H1 (cell line): ENCODE measurements at regions of chr9 and their contacts with region 1.

Region 1: DNA sequence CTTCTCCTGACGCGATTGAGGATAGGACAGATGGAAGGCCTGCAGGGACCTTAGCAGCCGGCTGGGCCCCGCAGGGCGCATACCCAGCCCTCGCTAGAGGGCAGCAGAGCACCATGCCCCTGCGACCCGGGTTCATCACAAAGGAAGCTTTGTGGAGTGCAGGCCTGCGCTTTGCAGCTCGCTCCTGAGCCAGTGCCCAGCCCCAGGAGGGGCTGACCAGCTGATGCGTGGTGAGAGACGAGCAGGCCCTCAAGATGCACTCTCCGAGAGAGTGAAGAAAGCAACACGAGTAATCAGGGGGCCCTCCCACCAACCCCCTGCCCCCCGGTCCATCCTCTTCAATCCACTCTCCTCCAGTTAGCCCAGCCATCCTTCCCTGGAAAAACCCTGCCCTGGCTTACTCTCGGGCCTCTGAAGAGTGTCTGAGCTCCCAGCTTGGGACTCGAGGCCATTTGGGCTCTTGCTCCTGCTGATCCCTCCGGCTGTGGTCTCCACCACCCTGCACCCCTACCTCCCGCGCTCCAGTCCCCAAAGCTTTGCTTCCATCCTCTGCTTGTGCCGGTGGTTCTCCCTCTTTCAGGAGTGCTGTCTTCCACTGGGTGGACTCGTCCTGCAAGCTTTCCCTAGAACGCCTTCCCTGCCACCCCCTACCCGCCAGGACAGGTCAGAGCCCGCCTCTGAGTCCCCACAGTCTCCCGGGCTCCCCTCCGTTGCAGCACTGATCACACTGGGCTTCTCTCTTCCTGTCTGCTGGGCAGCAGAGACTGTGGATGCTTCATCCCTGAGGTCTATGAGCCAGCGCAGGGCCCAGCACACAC is 9.1 kb upstream of the KIF12 start:
- DNase-seq: peak; percentile 80 to 93
- H3K4me3 ChIP-seq: no peak overlapping the region
- H3K27ac ChIP-seq: no peak overlapping the region
- H3K4me1 ChIP-seq: peaks cover 0 to 9% (median 7%) of the 10 kb centered on the region in 4 experiments; a peak in 6 of 7 replicates
- H3K27me3 ChIP-seq: peaks cover 0 to 15% (median 4%) of the 10 kb centered on the region in 4 experiments; a peak in 3 of 7 replicates
- CTCF ChIP-seq: peak; percentile 98 to 99 (median 98)
- EP300 ChIP-seq: no peak
- POLR2A ChIP-seq: no peak
- RAD21 ChIP-seq: peak; percentile 99

Region 2: DNA sequence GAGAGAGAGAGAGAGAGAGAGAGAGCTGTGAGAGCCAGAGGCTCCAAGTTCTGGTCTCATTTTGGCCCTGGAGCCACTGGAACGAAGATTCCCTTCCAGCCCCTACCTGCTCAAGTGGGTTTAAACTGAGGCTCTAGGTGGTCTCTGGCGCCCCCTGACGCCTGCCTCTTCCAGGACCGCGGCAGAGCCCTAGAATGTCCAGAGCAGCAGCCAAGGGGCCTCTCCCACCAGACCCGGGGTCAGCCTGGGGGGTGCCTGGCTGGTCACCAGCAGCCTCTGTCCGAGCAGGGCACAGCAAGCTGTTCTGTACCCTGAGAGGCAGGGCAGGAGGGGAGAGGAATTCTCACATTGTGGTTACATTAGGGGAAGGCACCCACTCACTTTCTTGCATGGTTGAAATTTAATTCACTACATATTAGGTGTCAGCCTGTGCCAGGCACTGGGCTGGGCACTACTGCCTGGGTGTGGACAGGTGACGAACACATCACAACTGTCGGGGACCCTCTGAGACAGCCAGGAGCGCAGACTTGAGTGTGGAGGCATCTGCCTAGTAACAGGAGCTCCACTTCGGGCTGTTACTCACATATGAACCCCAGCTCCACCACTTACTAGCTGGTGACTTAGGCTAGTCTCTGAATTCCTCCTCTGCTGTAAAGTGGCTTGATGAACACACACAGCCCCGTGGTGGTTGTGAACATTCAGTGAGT is 74.7 kb before region 1 on chr9:
- CTCF ChIA-PET with region 1: no interaction called
- POLR2A ChIA-PET with region 1: no interaction called
- DNase-seq: peak in 1 of 2 experiments; percentile 82
- H3K4me3 ChIP-seq: no peak overlapping the region
- H3K27ac ChIP-seq: no peak overlapping the region
- H3K4me1 ChIP-seq: peaks cover 0 to 8% (median 6%) of the 10 kb centered on the region in 4 experiments; a peak in 4 of 7 replicates
- H3K27me3 ChIP-seq: no peaks in the 10 kb centered on the region
- CTCF ChIP-seq: peak; percentile 72 to 84 (median 84)
- EP300 ChIP-seq: no peak
- POLR2A ChIP-seq: no peak
- RAD21 ChIP-seq: peak; percentile 90 to 95

Region 3: DNA sequence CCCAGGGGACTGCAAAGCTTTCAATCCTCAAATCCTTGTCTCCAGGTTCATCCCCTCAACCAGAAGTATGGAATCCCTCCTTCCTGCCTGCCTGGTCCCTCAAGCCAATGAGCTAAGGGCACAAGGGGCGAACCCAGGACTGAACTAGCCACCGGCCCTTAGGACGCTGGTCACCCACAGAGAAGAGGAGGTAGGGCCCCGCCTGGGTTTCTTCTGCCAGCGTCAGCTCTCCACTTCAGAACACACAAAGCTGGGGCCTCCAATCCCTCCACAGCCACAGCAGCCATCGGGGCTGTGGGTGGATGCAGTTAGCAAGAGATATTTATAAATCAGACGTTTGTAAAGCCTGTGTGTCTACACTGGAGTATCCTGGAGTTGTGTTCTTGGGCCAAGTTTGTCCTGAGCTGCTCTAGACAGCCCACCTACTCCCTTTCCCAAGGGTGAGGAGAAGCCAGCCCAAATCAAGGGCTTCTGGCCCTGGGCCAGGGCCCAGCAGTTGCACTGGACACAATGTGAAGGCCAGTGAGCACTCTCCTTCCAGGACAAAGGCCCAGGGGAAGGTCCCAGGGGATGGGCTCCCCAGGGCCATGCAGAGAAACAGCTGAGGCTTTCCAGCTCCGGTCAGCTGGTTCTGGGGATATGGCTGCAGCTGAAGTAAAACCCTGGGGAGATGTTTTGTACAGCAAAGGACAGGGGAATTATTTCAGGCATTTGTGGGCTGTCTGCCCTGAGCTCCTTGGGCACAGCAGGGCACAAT is 49.0 kb before region 1 on chr9:
- CTCF ChIA-PET with region 1: no interaction called
- POLR2A ChIA-PET with region 1: no interaction called
- DNase-seq: no peak
- H3K4me3 ChIP-seq: no peak overlapping the region
- H3K27ac ChIP-seq: no peak overlapping the region
- H3K4me1 ChIP-seq: no peaks in the 10 kb centered on the region
- H3K27me3 ChIP-seq: no peaks in the 10 kb centered on the region
- CTCF ChIP-seq: no peak
- EP300 ChIP-seq: no peak
- POLR2A ChIP-seq: no peak
- RAD21 ChIP-seq: no peak

Region 4: DNA sequence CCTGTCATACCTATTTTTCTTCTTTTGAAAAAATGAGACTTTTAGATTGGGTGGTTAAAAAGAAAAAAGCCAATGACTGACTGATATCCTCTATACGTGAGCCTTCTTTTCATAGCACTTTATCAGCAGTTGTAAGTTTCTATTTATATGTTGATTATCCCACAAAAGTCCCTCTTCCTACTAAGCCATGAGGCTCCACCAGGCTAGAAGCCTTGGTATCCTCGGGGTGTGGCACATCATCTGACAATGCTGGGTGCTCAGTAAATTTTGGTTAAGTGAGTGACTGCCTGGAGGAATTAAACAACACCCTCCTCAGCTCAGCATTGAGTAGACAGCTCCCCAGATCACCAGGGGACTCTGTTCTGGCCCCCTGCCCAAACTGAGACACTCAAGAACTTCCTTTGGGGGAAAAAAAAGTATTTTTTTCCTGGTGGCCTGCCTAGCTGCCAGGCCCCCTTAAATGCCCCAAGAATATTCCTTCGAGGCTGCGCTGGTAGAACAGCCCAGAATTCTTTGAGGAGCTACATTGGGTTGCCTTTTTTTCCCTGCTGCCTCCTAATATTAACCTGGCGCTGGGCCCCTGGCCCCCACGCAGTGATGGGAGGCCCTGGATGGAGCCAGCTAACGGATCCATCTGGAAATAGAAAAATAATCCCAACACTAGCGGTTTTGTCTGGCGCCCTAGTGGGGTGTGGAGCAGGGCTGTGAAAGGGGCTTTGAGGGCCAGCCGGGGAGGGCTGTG is 23.8 kb after region 1 on chr9:
- CTCF ChIA-PET with region 1: interaction called, 123 read pairs
- POLR2A ChIA-PET with region 1: no interaction called
- DNase-seq: no peak
- H3K4me3 ChIP-seq: no peak overlapping the region
- H3K27ac ChIP-seq: no peak overlapping the region
- H3K4me1 ChIP-seq: peaks cover 0 to 2% (median 0%) of the 10 kb centered on the region in 4 experiments; a peak in 2 of 7 replicates
- H3K27me3 ChIP-seq: no peaks in the 10 kb centered on the region; a peak in 1 of 7 replicates
- CTCF ChIP-seq: no peak
- EP300 ChIP-seq: no peak
- POLR2A ChIP-seq: no peak
- RAD21 ChIP-seq: no peak

Region 5: DNA sequence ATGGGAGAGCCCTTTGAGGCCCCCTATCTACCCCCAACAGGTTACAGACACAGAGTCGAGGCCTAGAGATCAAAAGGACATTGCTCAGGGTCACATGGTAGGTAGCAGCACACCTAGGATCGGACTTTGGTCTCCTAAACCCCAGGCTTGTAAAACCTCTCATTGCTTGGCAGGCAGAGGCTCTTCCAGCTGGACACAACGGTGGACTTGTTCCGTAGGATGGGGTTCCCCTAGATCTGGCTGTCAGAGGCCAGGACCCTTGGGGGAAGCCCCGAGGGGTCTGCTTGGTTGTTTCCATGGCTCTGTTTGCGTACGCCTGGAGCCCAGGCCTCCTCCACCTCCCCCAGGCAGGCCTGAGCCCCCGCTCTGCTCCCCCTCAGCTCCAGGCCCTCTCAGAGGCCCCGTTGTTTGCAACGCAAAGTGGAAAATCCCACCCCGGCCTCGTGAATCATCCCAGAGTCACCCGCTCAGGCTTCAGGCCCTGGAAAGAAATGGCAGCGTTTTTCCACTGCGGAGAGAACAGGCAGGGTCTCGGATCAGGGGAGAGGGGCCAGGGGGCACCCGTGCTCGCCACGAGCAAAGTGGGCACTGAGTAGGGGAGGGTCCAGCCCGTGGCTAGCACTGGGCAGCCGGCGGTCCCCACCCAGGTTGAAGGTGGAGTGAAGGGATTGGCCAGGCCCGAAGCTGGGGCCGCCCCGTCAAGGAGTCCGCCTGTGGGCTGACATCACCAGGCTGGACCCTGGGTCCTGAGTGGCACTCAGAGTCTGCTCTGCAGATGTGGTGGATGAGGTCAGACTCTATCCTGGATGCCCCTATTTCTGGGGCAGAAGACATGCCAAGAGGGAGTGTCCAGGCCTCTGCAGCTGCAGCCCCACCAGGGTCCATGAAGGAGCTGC is 66.9 kb after region 1 on chr9:
- CTCF ChIA-PET with region 1: interaction called, 16 read pairs
- POLR2A ChIA-PET with region 1: no interaction called
- DNase-seq: no peak
- H3K4me3 ChIP-seq: no peak overlapping the region
- H3K27ac ChIP-seq: no peak overlapping the region
- H3K4me1 ChIP-seq: no peaks in the 10 kb centered on the region; a peak in 1 of 7 replicates
- H3K27me3 ChIP-seq: no peaks in the 10 kb centered on the region
- CTCF ChIP-seq: no peak
- EP300 ChIP-seq: no peak
- POLR2A ChIP-seq: no peak
- RAD21 ChIP-seq: no peak

Region 6: GRCh38 chr9:114229295-114229694 is 121.1 kb after region 1 on chr9:
- CTCF ChIA-PET with region 1: interaction called, 11 read pairs
- POLR2A ChIA-PET with region 1: no interaction called
- DNase-seq: no peak
- H3K4me3 ChIP-seq: no peak overlapping the region
- H3K27ac ChIP-seq: 0 out of 2 replicates have a peak overlapping the region, but pooled peaks have one; percentile 19
- H3K4me1 ChIP-seq: peaks cover 0 to 10% (median under 1%) of the 10 kb centered on the region in 4 experiments; a peak in 2 of 7 replicates
- H3K27me3 ChIP-seq: no peaks in the 10 kb centered on the region
- CTCF ChIP-seq: no peak
- EP300 ChIP-seq: no peak
- POLR2A ChIP-seq: no peak
- RAD21 ChIP-seq: no peak

Region 7: DNA sequence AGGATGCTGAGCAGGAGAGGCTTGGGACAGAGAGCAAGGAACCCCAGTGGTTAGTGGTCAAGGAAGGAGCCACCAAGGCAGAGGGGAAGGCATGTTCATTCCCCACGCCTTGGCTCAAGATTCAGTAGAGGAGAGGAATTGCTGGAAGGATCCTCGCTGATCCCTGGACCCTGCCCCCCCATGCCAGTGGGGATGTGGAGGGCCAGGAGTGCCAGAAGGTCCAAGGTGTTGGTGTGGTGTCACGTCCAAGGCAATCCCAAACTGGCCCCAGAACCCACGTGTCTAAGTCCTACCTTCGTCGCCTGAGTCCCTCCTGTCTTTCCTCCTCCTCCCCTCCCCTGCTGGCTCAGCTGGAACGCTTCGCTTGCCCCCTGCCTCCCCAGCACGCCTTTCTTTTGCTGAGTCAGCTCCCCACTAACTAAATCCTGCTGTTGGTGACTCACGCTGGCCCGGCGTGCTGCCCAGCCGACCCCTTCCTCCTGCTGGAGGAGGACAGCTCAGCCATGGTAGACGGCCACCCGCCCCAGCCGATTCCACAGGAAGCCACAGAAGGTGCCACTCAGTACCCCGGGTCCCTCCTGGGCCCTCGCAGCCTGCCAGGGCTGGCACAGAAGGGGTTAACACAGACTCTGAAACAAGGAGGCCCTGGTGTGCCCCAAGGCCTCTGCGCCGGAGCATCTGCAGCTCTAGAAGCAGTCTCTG is 177.1 kb after region 1 on chr9:
- CTCF ChIA-PET with region 1: interaction called, 205 read pairs
- POLR2A ChIA-PET with region 1: interaction called, 6 read pairs
- DNase-seq: no peak
- H3K4me3 ChIP-seq: no peak overlapping the region
- H3K27ac ChIP-seq: no peak overlapping the region
- H3K4me1 ChIP-seq: peaks cover 0 to 20% (median 4%) of the 10 kb centered on the region in 4 experiments; a peak in 5 of 7 replicates
- H3K27me3 ChIP-seq: no peaks in the 10 kb centered on the region
- CTCF ChIP-seq: no peak
- EP300 ChIP-seq: no peak
- POLR2A ChIP-seq: no peak
- RAD21 ChIP-seq: no peak